Activated B cell treated with CpG ODN at 0.5 μM for 24 hours (primary cell): ENCODE measurements at regions of chr3 and their contacts with region 1.

Region 1: DNA sequence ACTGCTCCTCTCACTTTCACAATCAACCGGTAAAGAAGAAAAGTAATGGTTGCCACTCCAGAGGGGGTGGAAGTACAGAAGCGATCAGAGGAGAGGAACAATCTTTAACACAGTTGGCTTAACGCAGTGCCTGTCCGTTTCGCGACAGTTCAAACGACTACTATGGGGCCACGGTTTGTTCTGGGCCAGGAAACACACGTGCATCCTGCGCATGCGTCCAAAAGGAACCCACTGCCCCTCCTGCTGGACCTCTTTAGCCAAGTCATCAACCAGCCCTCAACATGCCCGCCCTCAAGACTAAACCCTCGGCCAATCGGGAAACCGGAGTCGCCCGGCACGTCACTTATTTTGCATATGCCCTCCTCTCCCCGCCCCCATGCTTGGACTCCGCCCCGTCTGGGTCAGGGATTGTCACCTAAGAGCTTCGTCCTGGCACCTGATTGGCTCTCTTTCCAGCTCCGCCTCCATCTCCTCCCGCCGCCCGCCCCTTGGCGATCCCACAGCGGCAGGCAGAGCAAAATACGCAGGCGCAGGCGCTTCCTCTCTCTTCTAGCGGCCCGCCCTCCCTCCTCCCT is 345 bp upstream of the CDV3 start:
- DNase-seq: peak; percentile 100
- ATAC-seq: peak; percentile 81
- H3K4me3 Mint-ChIP-seq: peak overlapping the region; percentile 85
- H3K27ac Mint-ChIP-seq: peak overlapping the region; percentile 99
- H3K4me1 Mint-ChIP-seq: peaks cover 74% of the 10 kb centered on the region
- H3K27me3 Mint-ChIP-seq: no peaks in the 10 kb centered on the region
- CTCF ChIP-seq: no peak

Region 2: GRCh38 chr3:132722164-132723024 is 850.7 kb before region 1 on chr3 and contains the start of gene NPHP3:
- CTCF ChIA-PET with region 1: no interaction called
- POLR2A ChIA-PET with region 1: interaction called, 14 read pairs
- intact Hi-C with region 1: loop called (anchors 1 kb)
- DNase-seq: peak; percentile 82
- ATAC-seq: peak; percentile 80
- H3K4me3 Mint-ChIP-seq: peak within 1 kb of the TSS; percentile 90
- H3K27ac Mint-ChIP-seq: peak within 1 kb of the TSS; percentile 85
- H3K4me1 Mint-ChIP-seq: peaks cover 31% of the 10 kb centered on the region
- H3K27me3 Mint-ChIP-seq: no peaks in the 10 kb centered on the region
- CTCF ChIP-seq: no peak
- total RNA-seq, gene NPHP3: 20.2 and 23.2 TPM in 2 replicates

Region 3: GRCh38 chr3:133448478-133449122 is 124.5 kb before region 1 on chr3:
- CTCF ChIA-PET with region 1: interaction called, 5 read pairs
- POLR2A ChIA-PET with region 1: interaction called, 149 read pairs
- intact Hi-C with region 1: loop called (anchors 1 kb)
- DNase-seq: peak; percentile 40
- ATAC-seq: peak; percentile 88
- H3K4me3 Mint-ChIP-seq: peak overlapping the region; percentile 80
- H3K27ac Mint-ChIP-seq: peak overlapping the region; percentile 95
- H3K4me1 Mint-ChIP-seq: peaks cover 55% of the 10 kb centered on the region
- H3K27me3 Mint-ChIP-seq: peaks cover 6% of the 10 kb centered on the region
- CTCF ChIP-seq: no peak

Region 4: GRCh38 chr3:133487920-133488540 is 85.1 kb before region 1 on chr3:
- CTCF ChIA-PET with region 1: interaction called, 14 read pairs
- POLR2A ChIA-PET with region 1: interaction called, 60 read pairs
- intact Hi-C with region 1: loop called (anchors 1 kb)
- DNase-seq: no peak
- ATAC-seq: peak; percentile 20
- H3K4me3 Mint-ChIP-seq: no peak overlapping the region
- H3K27ac Mint-ChIP-seq: no peak overlapping the region
- H3K4me1 Mint-ChIP-seq: peaks cover 57% of the 10 kb centered on the region
- H3K27me3 Mint-ChIP-seq: no peaks in the 10 kb centered on the region
- CTCF ChIP-seq: no peak

Region 5: DNA sequence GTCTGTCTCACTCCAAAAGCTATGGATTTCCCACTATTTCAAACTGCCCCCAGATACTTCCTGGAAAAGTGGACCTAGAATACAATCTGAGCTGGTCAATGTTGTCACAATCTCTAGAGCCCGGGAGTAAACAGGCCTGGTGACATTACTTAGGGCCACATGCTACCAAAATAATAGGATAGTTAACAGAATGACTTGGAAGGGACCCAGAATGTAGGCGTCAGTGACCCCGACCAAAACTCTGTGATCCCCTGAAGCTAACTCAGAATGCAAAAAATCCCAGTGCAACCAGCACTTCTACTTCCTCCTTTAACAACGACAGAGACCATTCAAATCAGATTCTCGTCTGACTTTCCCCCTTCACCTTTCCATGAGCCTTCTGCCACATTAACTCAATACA is 51.2 kb before region 1 on chr3:
- CTCF ChIA-PET with region 1: interaction called, 3 read pairs
- POLR2A ChIA-PET with region 1: interaction called, 5 read pairs
- intact Hi-C with region 1: loop called (anchors 5 kb)
- DNase-seq: no peak
- ATAC-seq: no peak
- H3K4me3 Mint-ChIP-seq: no peak overlapping the region
- H3K27ac Mint-ChIP-seq: no peak overlapping the region
- H3K4me1 Mint-ChIP-seq: peaks cover 15% of the 10 kb centered on the region
- H3K27me3 Mint-ChIP-seq: no peaks in the 10 kb centered on the region
- CTCF ChIP-seq: no peak

Region 6: DNA sequence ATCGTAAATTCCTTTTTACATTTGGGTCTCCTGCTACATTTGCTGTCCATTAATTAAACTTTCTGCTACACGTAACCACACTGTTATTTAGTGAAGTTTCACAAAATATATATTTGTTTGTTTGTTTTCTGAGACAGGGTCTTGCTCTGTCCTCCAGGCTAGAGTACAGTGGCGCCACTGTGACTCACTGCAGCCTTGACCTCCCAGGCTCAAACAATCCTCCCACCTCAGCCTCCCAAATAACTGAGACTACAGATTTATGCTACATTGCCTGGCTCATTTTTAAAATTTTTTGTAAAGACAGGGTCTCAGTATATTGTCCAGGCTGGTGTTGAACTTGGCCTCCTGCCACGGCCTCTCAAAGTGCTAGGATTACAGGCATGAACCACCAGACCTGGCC is 68.1 kb after region 1 on chr3:
- CTCF ChIA-PET with region 1: no interaction called
- POLR2A ChIA-PET with region 1: no interaction called
- intact Hi-C with region 1: no loop called
- DNase-seq: no peak
- ATAC-seq: no peak
- H3K4me3 Mint-ChIP-seq: no peak overlapping the region
- H3K27ac Mint-ChIP-seq: no peak overlapping the region
- H3K4me1 Mint-ChIP-seq: no peaks in the 10 kb centered on the region
- H3K27me3 Mint-ChIP-seq: no peaks in the 10 kb centered on the region
- CTCF ChIP-seq: no peak

Region 7: DNA sequence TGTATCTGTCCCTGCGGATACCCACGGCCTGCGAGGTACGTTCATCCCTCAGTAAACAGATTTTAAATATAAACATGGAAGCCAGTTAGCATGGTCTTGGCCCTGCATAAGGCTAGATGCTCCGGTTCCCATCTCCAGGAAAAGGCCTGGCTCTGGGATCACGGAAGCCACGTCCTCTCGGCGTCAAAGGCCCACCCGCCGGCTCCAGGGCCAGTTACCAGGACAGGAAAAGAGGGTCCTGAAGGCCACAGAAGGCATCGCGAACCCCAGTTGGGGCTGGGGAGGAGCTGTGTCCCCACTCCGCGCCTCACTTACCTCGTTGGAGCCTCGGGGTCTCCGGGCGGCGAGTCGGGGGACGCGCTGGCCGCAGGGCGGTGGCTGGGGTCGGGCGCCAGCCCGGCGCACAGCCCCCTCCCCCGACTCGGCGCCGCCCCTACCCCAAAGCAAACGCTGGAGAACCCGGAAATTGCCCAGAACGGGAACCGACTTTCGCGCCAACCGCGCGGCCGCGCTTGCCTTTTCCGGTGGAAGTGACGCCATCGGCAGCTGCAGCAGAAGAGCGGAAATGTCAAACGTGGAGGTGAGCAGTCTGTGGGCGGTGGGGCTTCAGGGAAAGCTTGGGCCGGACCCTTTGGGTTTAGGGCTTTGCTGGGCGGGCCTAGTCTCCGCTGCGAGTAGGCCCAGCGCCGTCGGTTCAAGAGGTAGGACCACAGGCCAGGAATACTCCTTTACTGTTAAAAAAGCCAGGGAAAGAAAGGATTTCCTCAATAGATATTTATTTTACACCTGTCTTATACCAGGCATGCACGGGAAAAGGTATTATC is 88.5 kb after region 1 on chr3 and contains the start of gene TOPBP1:
- CTCF ChIA-PET with region 1: interaction called, 3 read pairs
- POLR2A ChIA-PET with region 1: interaction called, 20 read pairs
- intact Hi-C with region 1: loop called (anchors 1 kb)
- DNase-seq: peak; percentile 76
- ATAC-seq: peak; percentile 86
- H3K4me3 Mint-ChIP-seq: peak within 1 kb of the TSS; percentile 98
- H3K27ac Mint-ChIP-seq: peak within 1 kb of the TSS; percentile 95
- H3K4me1 Mint-ChIP-seq: peaks cover 34% of the 10 kb centered on the region
- H3K27me3 Mint-ChIP-seq: no peaks in the 10 kb centered on the region
- CTCF ChIP-seq: no peak
- total RNA-seq, gene TOPBP1: 45.8 and 49.9 TPM in 2 replicates

Region 8: GRCh38 chr3:134485718-134486576 is 912.8 kb after region 1 on chr3 and contains the starts of genes ANAPC13 and CEP63:
- CTCF ChIA-PET with region 1: no interaction called
- POLR2A ChIA-PET with region 1: interaction called, 10 read pairs
- intact Hi-C with region 1: no loop called
- DNase-seq: peak; percentile 84
- ATAC-seq: peak; percentile 82
- H3K4me3 Mint-ChIP-seq: peak within 1 kb of the TSS; percentile 99
- H3K27ac Mint-ChIP-seq: peak within 1 kb of the TSS; percentile 98
- H3K4me1 Mint-ChIP-seq: peaks cover 51% of the 10 kb centered on the region
- H3K27me3 Mint-ChIP-seq: no peaks in the 10 kb centered on the region
- CTCF ChIP-seq: no peak
- total RNA-seq, gene ANAPC13: 27.5 and 31.3 TPM in 2 replicates
- total RNA-seq, gene CEP63: 21.3 and 24.6 TPM in 2 replicates